ENCODE measurements at regions of chr2 and their contacts with region 1.

Region 1: DNA sequence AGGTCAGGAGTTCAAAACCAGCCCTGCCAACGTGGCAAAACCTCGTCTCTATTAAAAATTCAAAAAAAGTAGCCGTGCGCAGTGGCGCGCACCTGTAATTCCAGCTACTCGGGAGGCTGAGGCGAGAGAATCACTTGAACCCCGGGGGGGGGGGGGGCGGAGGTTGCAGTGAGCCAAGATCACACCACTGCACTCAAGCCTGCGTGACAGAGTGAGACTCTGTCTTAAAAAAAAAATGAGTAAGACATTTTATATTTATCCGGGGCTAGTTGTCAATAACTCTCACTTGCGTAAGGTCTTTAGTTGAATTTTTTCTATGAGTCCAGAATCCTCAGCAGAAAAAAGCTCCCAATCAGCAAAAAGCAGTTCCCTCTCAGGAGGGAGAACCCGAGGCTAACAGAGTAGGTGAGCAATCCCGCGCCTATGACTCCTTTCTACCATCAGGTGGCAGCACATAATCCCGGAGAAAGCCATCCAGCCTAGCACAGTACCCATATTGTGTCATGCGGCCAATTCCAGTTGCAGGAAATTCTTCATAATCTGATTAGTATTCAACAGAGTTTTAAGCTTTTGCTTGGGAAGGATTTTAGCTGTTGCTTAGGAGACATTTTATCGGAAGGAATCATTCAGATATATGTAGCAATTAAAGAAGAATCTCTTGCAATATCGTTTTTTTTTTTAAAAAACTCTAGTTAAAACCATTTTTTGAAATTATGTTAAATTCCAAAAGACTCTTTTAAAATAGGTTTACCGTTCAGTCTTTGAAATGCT is 11.9 kb upstream of the CRYGA start:
- DNase-seq: peak; percentile 63 to 78
- ATAC-seq: peak; percentile 97 to 100
- H3K4me3 ChIP-seq: no peak overlapping the region
- H3K27ac ChIP-seq: 0 out of 6 replicates have a peak overlapping the region, but pooled peaks of 1 of the 2 experiments have one; percentile 39
- H3K4me1 ChIP-seq: 0 out of 3 replicates have a peak, but pooled peaks cover 3% of the 10 kb centered on the region
- CTCF ChIP-seq: peak; percentile 76
- EP300 ChIP-seq: no peak
- POLR2A ChIP-seq: no peak
- RAD21 ChIP-seq: peak; percentile 64 to 75

Region 2: DNA sequence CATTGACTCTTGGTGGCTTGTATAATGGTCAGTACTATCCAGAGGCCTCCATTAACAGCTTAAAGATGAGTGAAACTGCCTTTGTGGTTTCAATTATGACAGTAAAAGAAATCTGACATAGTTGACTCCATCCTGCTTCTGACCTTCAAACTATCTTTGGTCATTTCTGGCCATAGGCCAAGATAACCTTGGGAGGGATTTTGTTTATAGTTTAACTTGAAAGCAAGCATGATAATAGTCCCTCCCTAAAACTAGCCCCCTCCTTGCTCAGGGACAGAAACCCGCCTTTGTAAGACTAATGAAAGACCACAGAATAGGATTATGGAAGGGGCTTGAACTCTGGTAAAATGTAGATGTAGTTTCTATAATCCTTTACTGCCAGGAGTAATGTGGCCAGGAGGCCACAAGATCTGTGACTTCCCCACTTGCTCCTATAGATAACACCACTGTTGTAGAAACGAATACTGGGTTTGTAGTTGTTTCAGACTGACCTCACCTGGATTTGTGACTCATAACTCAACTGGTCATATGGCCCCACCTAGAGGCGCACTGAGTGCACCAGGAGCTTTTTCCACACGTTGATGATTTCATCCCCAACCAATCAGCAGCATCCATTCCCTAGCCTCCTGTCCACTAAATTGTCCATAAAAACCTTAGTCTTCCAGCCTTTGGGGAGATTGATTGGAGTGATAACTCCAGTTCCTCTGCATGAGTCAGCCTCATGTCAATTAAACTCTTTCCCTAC is 141.3 kb before region 1 on chr2:
- CTCF ChIA-PET with region 1: no interaction called
- POLR2A ChIA-PET with region 1: no interaction called
- DNase-seq: peak in 1 of 2 experiments; percentile 65
- ATAC-seq: peak; percentile 63 to 75; a peak in 4 of 6 replicates
- H3K4me3 ChIP-seq: no peak overlapping the region
- H3K27ac ChIP-seq: no peak overlapping the region
- H3K4me1 ChIP-seq: 0 out of 3 replicates have a peak, but pooled peaks cover 6% of the 10 kb centered on the region
- CTCF ChIP-seq: no peak; the same call in 2 of the 3 replicates
- EP300 ChIP-seq: no peak
- POLR2A ChIP-seq: no peak
- RAD21 ChIP-seq: peak; percentile 45 to 48; a peak in 3 of 5 replicates

Region 3: GRCh38 chr2:208101716-208102631 is 73.3 kb before region 1 on chr2:
- CTCF ChIA-PET with region 1: interaction called, 19 read pairs
- POLR2A ChIA-PET with region 1: no interaction called
- DNase-seq: peak in 1 of 2 experiments; percentile 45
- ATAC-seq: peak; percentile 84 to 87; a peak in 5 of 6 replicates
- H3K4me3 ChIP-seq: no peak overlapping the region
- H3K27ac ChIP-seq: no peak overlapping the region
- H3K4me1 ChIP-seq: peaks cover 5% of the 10 kb centered on the region; the same call in 1 of the 3 replicates
- CTCF ChIP-seq: peak; percentile 63
- EP300 ChIP-seq: no peak
- POLR2A ChIP-seq: no peak
- RAD21 ChIP-seq: peak; percentile 66 to 72

Region 4: GRCh38 chr2:208130712-208131110 is 44.5 kb before region 1 on chr2:
- CTCF ChIA-PET with region 1: no interaction called
- POLR2A ChIA-PET with region 1: no interaction called
- DNase-seq: no peak
- ATAC-seq: no peak
- H3K4me3 ChIP-seq: no peak overlapping the region
- H3K27ac ChIP-seq: no peak overlapping the region
- H3K4me1 ChIP-seq: no peaks in the 10 kb centered on the region
- CTCF ChIP-seq: no peak
- EP300 ChIP-seq: no peak
- POLR2A ChIP-seq: no peak
- RAD21 ChIP-seq: no peak

Region 5: GRCh38 chr2:208142240-208142924 is 32.9 kb before region 1 on chr2:
- CTCF ChIA-PET with region 1: interaction called, 11 read pairs
- POLR2A ChIA-PET with region 1: no interaction called
- DNase-seq: no peak
- ATAC-seq: no peak; a peak in 1 of 6 replicates
- H3K4me3 ChIP-seq: no peak overlapping the region
- H3K27ac ChIP-seq: no peak overlapping the region
- H3K4me1 ChIP-seq: no peaks in the 10 kb centered on the region
- CTCF ChIP-seq: no peak
- EP300 ChIP-seq: no peak
- POLR2A ChIP-seq: no peak
- RAD21 ChIP-seq: no peak

Region 6: DNA sequence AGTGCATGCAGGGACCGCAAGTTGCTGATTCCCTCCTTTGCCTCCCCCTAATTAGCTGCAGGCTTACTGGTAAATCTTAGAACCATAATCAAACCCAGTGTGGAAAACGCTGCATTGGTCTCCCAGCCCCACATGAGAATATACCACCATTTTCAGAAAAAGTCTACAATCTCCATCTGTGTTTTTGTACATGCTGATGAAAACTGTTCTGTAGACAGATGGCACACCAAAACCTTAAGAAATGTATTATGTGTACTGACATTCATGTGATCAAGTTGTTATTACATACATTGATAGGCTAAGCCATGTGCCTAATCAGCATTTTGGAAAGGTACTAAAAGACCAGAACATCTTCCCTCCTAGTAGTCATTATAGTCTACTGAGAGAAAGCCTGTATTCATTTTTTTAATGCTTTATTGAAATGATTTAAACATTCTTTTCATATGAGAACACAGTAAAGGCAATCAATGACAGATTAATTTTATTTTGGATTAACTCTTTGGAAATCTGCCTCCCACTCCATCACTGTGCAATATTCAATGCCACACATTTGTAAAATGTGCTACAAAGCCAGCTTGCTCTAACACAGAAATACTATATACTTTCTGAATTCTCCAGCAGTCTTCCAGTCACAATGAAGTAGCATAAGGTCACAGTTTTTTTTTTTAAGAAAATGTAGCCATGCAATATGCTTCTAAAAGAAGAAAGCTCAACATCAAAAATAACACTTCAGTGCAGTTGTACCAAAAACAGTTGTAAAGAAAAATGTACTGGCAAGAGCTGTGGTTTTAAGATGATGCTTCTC is 10.1 kb before region 1 on chr2:
- CTCF ChIA-PET with region 1: interaction called, 11 read pairs
- POLR2A ChIA-PET with region 1: no interaction called
- DNase-seq: no peak
- ATAC-seq: no peak; a peak in 1 of 6 replicates
- H3K4me3 ChIP-seq: no peak overlapping the region
- H3K27ac ChIP-seq: no peak overlapping the region
- H3K4me1 ChIP-seq: no peaks in the 10 kb centered on the region
- CTCF ChIP-seq: no peak
- EP300 ChIP-seq: no peak
- POLR2A ChIP-seq: no peak
- RAD21 ChIP-seq: no peak

Region 7: GRCh38 chr2:208186465-208186864 is 11.2 kb after region 1 on chr2:
- CTCF ChIA-PET with region 1: interaction called, 13 read pairs
- POLR2A ChIA-PET with region 1: no interaction called
- DNase-seq: no peak
- ATAC-seq: no peak
- H3K4me3 ChIP-seq: no peak overlapping the region
- H3K27ac ChIP-seq: no peak overlapping the region
- H3K4me1 ChIP-seq: no peaks in the 10 kb centered on the region
- CTCF ChIP-seq: no peak
- EP300 ChIP-seq: no peak
- POLR2A ChIP-seq: no peak
- RAD21 ChIP-seq: no peak

Region 8: GRCh38 chr2:208210688-208211451 is 35.6 kb after region 1 on chr2:
- CTCF ChIA-PET with region 1: interaction called, 11 read pairs
- POLR2A ChIA-PET with region 1: no interaction called
- DNase-seq: no peak
- ATAC-seq: no peak
- H3K4me3 ChIP-seq: no peak overlapping the region
- H3K27ac ChIP-seq: no peak overlapping the region
- H3K4me1 ChIP-seq: no peaks in the 10 kb centered on the region
- CTCF ChIP-seq: no peak
- EP300 ChIP-seq: no peak
- POLR2A ChIP-seq: no peak
- RAD21 ChIP-seq: no peak

Region 9: GRCh38 chr2:208254871-208255556 is 79.8 kb after region 1 on chr2 and contains the start of gene IDH1:
- CTCF ChIA-PET with region 1: interaction called, 64 read pairs
- POLR2A ChIA-PET with region 1: interaction called, 10 read pairs
- DNase-seq: peak; percentile 85 to 95
- ATAC-seq: peak; percentile 88
- H3K4me3 ChIP-seq: peak within 1 kb of the TSS; percentile 96
- H3K27ac ChIP-seq: peak within 1 kb of the TSS; percentile 86 to 90
- H3K4me1 ChIP-seq: peaks cover 37% of the 10 kb centered on the region
- CTCF ChIP-seq: peak; percentile 69
- EP300 ChIP-seq: no peak
- POLR2A ChIP-seq: peak; percentile 80
- RAD21 ChIP-seq: peak; percentile 38 to 64; a peak in 4 of 5 replicates
- polyA plus RNA-seq, gene IDH1: 272 and 346 TPM in 2 replicates

Measured in A549 (cell line).